Calu3 (cell line): ENCODE measurements at regions of chr1 and their contacts with region 1.

Region 1: DNA sequence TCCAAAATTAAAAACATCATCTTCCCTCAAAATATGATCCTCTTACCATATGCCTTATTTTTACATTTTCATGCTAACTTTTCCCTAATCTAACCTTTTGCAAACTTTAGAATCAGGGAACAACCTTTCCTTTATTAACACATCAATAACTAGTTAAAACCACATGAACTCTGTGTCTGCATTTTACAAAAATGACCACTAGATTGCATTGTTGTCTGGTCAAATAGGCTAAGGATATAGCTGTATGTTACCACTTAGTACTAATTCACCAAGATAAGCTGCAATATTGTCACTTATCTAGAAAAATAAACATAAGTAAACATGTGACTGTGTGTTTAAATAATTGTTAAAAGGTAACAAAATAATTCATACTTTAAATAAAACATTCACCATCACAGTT is 82.3 kb downstream of the DENND1B start:
- DNase-seq: no peak
- H3K4me3 Mint-ChIP-seq: no peak overlapping the region
- H3K27ac Mint-ChIP-seq: no peak overlapping the region
- H3K4me1 Mint-ChIP-seq: peaks cover 36% of the 10 kb centered on the region
- H3K27me3 Mint-ChIP-seq: no peaks in the 10 kb centered on the region
- CTCF ChIP-seq: peak; percentile 17

Region 2: GRCh38 chr1:197614916-197615692 is 77.9 kb before region 1 on chr1:
- CTCF ChIA-PET with region 1: interaction called, 4 read pairs
- intact Hi-C with region 1: loop called (anchors 5 kb)
- DNase-seq: peak; percentile 48
- H3K4me3 Mint-ChIP-seq: no peak overlapping the region
- H3K27ac Mint-ChIP-seq: no peak overlapping the region
- H3K4me1 Mint-ChIP-seq: no peaks in the 10 kb centered on the region
- H3K27me3 Mint-ChIP-seq: no peaks in the 10 kb centered on the region
- CTCF ChIP-seq: peak; percentile 46

Region 3: GRCh38 chr1:197761621-197762020 is 68.7 kb after region 1 on chr1:
- CTCF ChIA-PET with region 1: no interaction called
- intact Hi-C with region 1: no loop called
- DNase-seq: no peak
- H3K4me3 Mint-ChIP-seq: no peak overlapping the region
- H3K27ac Mint-ChIP-seq: no peak overlapping the region
- H3K4me1 Mint-ChIP-seq: peaks cover 8% of the 10 kb centered on the region
- H3K27me3 Mint-ChIP-seq: no peaks in the 10 kb centered on the region
- CTCF ChIP-seq: no peak

Region 4: DNA sequence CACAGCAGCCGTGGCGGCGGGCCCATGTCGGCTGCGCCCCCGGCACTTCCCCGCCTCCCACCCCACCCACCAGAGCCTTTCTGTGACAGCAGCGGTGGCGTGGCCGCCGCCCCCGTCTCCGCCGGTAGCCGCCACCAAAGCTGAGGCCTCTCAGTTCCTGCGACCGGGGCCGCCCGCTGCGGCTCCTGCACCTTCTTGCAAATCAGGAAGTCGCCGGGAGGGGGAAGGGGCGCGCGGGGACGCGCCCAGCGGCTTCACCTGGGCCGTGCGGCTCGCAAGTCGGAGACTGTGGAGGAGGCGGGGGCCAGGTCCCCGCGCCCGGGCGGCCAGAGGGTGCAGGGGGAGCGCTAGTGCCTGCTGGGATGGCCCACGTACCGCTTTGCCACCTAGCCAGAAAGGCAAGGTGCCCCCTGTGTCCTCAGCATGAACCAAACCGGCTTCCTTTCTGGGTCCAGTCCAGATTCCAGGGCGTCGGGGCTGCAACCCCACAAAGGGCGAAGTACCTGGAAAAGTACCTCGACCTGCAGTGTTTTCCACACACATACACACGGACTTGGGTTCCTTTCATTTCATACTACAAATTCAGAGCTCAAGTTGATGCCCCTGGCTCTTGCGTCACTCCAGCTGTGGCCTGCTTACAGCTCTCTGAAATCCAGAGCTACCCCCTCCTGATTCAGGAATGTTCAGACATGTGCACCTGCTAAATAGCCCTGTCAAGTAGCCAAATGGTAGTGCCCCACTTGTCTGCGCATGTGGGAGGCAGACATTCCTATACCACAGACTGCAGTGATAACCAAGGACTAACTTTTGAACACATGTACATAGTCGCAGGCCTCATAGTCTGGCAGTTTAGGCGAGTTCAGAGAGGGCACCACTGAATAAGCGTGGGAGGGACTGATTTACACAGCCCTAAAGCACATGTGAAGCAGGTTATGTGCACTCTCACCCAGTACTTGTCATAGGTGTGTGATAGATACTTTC is 82.6 kb after region 1 on chr1 and contains the start of gene DENND1B:
- CTCF ChIA-PET with region 1: interaction called, 3 read pairs
- intact Hi-C with region 1: loop called (anchors 2 kb)
- DNase-seq: peak; percentile 93
- H3K4me3 Mint-ChIP-seq: peak within 1 kb of the TSS; percentile 72
- H3K27ac Mint-ChIP-seq: peak within 1 kb of the TSS; percentile 93
- H3K4me1 Mint-ChIP-seq: peaks cover 44% of the 10 kb centered on the region
- H3K27me3 Mint-ChIP-seq: no peaks in the 10 kb centered on the region
- CTCF ChIP-seq: no peak
- total RNA-seq, gene DENND1B: 26.7 and 28.2 TPM in 2 replicates

Region 5: DNA sequence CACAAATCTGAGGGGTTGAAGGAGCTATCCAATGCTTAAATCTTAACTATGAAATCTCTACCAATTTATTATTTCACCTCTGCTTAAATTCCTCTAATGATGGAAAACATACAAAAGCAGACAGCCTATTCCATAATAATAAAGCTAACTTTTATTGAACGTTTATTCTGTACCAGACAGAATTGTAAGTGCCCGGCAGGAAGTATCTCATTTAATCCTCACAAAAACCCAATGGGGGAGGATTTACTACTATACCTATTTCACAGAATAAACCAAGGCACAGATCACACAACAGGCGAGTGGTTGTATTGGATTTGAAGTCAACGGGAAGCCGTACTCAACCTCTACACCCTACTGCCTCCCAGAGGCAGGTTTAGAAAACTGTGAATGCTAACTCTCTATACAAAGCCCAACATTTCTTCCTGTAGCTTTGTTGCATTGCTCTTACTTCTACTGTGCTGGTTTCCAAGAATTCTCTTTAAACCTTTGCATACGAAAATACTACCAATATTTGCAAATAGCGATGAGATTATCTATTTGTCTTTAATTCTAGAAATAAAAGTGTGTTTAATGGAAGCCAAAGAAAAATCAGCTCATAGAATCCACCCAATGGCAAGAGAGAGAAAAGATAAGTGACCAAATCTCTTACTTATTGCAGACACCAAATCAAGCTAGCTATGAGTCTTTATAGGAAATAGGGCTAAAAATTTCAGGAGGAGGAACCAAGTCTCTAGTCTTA is 176.0 kb after region 1 on chr1:
- CTCF ChIA-PET with region 1: interaction called, 26 read pairs
- intact Hi-C with region 1: loop called (anchors 1 kb)
- DNase-seq: peak; percentile 62
- H3K4me3 Mint-ChIP-seq: no peak overlapping the region
- H3K27ac Mint-ChIP-seq: no peak overlapping the region
- H3K4me1 Mint-ChIP-seq: peaks cover 1% of the 10 kb centered on the region
- H3K27me3 Mint-ChIP-seq: no peaks in the 10 kb centered on the region
- CTCF ChIP-seq: peak; percentile 68

Region 6: GRCh38 chr1:197924516-197925123 is 231.7 kb after region 1 on chr1:
- CTCF ChIA-PET with region 1: no interaction called
- intact Hi-C with region 1: loop called (anchors 5 kb)
- DNase-seq: peak; percentile 60
- H3K4me3 Mint-ChIP-seq: no peak overlapping the region
- H3K27ac Mint-ChIP-seq: no peak overlapping the region
- H3K4me1 Mint-ChIP-seq: peaks cover 49% of the 10 kb centered on the region
- H3K27me3 Mint-ChIP-seq: no peaks in the 10 kb centered on the region
- CTCF ChIP-seq: peak; percentile 51

Region 7: DNA sequence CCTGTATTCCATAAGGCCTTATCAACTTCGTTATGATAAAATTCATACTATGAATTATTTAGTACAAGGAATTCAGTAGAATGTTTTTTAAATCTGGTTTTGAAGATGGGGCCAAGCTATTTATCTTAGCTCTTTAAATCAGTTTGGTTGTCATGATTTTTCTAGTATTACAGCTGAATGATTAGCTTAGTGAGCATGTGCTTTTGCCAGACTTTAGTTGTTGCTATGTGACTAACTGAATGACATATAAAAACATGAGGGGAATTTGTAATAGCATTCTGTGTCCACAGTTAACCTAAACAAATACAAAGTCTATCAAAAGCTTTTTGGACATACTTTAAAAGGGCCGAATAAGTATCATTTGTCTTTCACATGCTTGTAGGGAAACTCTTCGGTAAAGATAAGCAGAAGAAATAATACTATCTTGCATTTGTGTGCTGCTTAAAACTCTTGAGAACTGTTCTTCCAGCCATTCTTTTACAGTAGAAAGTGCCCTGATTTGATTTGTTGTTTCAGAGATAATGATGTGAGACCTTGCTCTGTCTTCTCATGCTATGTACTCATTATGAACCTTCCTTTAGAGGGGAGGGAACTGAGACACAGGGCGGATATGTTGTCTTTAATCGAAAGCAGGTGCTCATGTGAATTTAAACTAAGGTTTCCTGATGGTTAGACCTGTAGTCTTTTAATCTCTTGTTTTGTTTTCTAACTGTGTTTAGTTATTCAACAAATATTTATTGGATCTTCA is 482.6 kb after region 1 on chr1:
- CTCF ChIA-PET with region 1: no interaction called
- intact Hi-C with region 1: loop called (anchors 10 kb)
- DNase-seq: no peak
- H3K4me3 Mint-ChIP-seq: no peak overlapping the region
- H3K27ac Mint-ChIP-seq: no peak overlapping the region
- H3K4me1 Mint-ChIP-seq: peaks cover 89% of the 10 kb centered on the region
- H3K27me3 Mint-ChIP-seq: no peaks in the 10 kb centered on the region
- CTCF ChIP-seq: no peak

Region 8: GRCh38 chr1:198681831-198682759 is 989.1 kb after region 1 on chr1:
- CTCF ChIA-PET with region 1: no interaction called
- intact Hi-C with region 1: loop called (anchors 10 kb)
- DNase-seq: peak; percentile 66
- H3K4me3 Mint-ChIP-seq: peak overlapping the region; percentile 53
- H3K27ac Mint-ChIP-seq: peak overlapping the region; percentile 81
- H3K4me1 Mint-ChIP-seq: peaks cover 20% of the 10 kb centered on the region
- H3K27me3 Mint-ChIP-seq: no peaks in the 10 kb centered on the region
- CTCF ChIP-seq: no peak